CD8-positive, alpha-beta T cell (primary cell): ENCODE measurements at regions of chr5 and their contacts with region 1.

Region 1: GRCh38 chr5:140113699-140114263 is at the start of gene PURA:
- DNase-seq: peak; percentile 93 to 98 (median 98)
- ATAC-seq: peak; percentile 91
- H3K4me3 ChIP-seq: peak within 1 kb of the TSS; percentile 74 to 88
- H3K4me3 Mint-ChIP-seq: peak within 1 kb of the TSS; percentile 91
- H3K27ac ChIP-seq: peak within 1 kb of the TSS; percentile 82 to 84
- H3K27ac Mint-ChIP-seq: peak within 1 kb of the TSS; percentile 95
- H3K4me1 ChIP-seq: peaks cover 69% of the 10 kb centered on the region
- H3K4me1 Mint-ChIP-seq: peaks cover 77% of the 10 kb centered on the region
- H3K27me3 ChIP-seq: no peaks in the 10 kb centered on the region
- H3K27me3 Mint-ChIP-seq: peaks cover 12% of the 10 kb centered on the region
- CTCF ChIP-seq: no peak
- total RNA-seq, gene PURA: 4.0 to 4.3 TPM

Region 2: DNA sequence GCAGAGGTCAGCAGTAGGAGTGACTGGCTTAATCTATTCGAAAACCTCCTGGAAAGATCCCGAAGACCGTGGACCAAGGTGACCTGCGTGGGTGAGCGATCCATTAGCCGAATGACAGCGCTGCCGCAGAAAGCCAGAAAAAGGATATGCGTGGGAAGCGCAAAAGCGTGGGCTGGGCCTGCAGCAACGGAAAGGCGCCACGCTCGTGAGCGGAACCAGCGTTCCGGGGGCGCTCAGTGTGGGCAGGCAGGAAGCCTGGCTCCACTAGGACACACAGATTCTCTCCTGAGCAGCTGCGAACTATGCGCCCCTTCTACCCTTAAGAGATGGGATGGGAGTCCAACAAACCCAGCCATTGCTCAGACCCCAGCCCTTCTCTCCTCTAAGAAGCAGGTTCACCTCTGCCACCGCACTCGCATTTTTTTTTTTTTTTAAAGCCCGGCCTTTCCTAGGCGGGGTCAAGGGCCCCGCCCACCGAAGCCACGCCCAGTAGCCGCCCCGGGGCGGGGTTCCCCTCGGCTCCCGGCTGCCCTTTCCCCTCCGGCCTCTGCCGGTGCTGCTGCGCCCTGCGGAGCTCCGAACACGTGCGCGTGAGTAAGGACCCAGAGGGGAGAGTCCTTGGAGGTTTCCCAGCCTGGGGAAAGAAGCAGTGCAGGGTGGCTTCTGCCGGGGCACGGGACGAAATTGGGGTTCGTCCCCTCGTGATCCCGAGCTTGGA is 840.0 kb before region 1 on chr5:
- CTCF ChIA-PET with region 1: no interaction called
- POLR2A ChIA-PET with region 1: no interaction called
- intact Hi-C with region 1: loop called in 1 of 2 experiments (anchors 10 kb)
- DNase-seq: peak; percentile 73 to 91 (median 83)
- ATAC-seq: peak; percentile 90
- H3K4me3 ChIP-seq: peak overlapping the region; percentile 81 to 86
- H3K4me3 Mint-ChIP-seq: peak overlapping the region; percentile 88
- H3K27ac ChIP-seq: peak overlapping the region; percentile 56 to 57
- H3K27ac Mint-ChIP-seq: peak overlapping the region; percentile 72
- H3K4me1 ChIP-seq: peaks cover 36% of the 10 kb centered on the region
- H3K4me1 Mint-ChIP-seq: peaks cover 50% of the 10 kb centered on the region
- H3K27me3 ChIP-seq: no peaks in the 10 kb centered on the region
- H3K27me3 Mint-ChIP-seq: no peaks in the 10 kb centered on the region
- CTCF ChIP-seq: no peak

Region 3: GRCh38 chr5:140073296-140073695 is 40.5 kb before region 1 on chr5:
- CTCF ChIA-PET with region 1: interaction called, 18 read pairs
- POLR2A ChIA-PET with region 1: no interaction called
- intact Hi-C with region 1: loop called (anchors 2 to 5 kb)
- DNase-seq: peak in 2 of 9 experiments; percentile 56 to 62
- ATAC-seq: no peak
- H3K4me3 ChIP-seq: no peak overlapping the region
- H3K4me3 Mint-ChIP-seq: no peak overlapping the region
- H3K27ac ChIP-seq: no peak overlapping the region
- H3K27ac Mint-ChIP-seq: no peak overlapping the region
- H3K4me1 ChIP-seq: no peaks in the 10 kb centered on the region
- H3K4me1 Mint-ChIP-seq: no peaks in the 10 kb centered on the region
- H3K27me3 ChIP-seq: peaks cover 0 to 12% of the 10 kb centered on the region in 2 experiments
- H3K27me3 Mint-ChIP-seq: peaks cover 28% of the 10 kb centered on the region
- CTCF ChIP-seq: peak; percentile 94

Region 4: DNA sequence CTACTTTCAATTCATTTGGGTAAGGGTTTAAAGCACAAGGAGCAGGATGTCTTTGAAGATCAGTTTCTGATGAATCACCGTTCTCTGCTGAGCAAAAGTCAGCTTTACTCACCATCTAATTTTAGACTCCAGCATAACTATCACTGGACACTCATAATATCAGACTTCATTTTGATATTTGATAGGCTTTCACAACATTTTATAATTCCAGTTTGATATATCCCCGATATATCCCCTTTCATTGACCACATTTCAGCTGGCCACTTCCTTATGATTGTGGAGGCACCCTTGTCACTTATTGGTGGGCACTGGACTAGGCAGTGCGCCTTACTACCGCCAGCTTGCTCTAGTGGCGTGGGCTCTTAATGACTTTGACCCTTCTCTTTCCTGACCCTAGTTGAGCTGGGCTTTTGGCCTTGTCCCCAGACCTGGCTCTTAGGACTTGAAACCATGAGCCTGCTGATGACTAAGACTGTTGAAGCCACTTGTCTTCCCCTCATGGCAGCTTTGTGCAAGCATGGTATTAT is 108.0 kb after region 1 on chr5:
- CTCF ChIA-PET with region 1: no interaction called
- POLR2A ChIA-PET with region 1: no interaction called
- intact Hi-C with region 1: no loop called
- DNase-seq: no peak
- ATAC-seq: no peak
- H3K4me3 ChIP-seq: no peak overlapping the region
- H3K4me3 Mint-ChIP-seq: no peak overlapping the region
- H3K27ac ChIP-seq: no peak overlapping the region
- H3K27ac Mint-ChIP-seq: no peak overlapping the region
- H3K4me1 ChIP-seq: no peaks in the 10 kb centered on the region
- H3K4me1 Mint-ChIP-seq: no peaks in the 10 kb centered on the region
- H3K27me3 ChIP-seq: no peaks in the 10 kb centered on the region
- H3K27me3 Mint-ChIP-seq: peaks cover 2% of the 10 kb centered on the region
- CTCF ChIP-seq: no peak

Region 5: GRCh38 chr5:140302786-140303639 is 189.2 kb after region 1 on chr5 and contains the start of gene PFDN1:
- CTCF ChIA-PET with region 1: no interaction called
- POLR2A ChIA-PET with region 1: no interaction called
- intact Hi-C with region 1: loop called (anchors 5 kb)
- DNase-seq: peak; percentile 77 to 97 (median 90)
- ATAC-seq: peak; percentile 100
- H3K4me3 ChIP-seq: peak within 1 kb of the TSS; percentile 73 to 87
- H3K4me3 Mint-ChIP-seq: peak within 1 kb of the TSS; percentile 99
- H3K27ac ChIP-seq: peak within 1 kb of the TSS; percentile 61 to 82
- H3K27ac Mint-ChIP-seq: peak within 1 kb of the TSS; percentile 98
- H3K4me1 ChIP-seq: peaks cover 14% of the 10 kb centered on the region
- H3K4me1 Mint-ChIP-seq: peaks cover 29% of the 10 kb centered on the region
- H3K27me3 ChIP-seq: no peaks in the 10 kb centered on the region
- H3K27me3 Mint-ChIP-seq: peaks cover 4% of the 10 kb centered on the region
- CTCF ChIP-seq: no peak
- total RNA-seq, gene PFDN1: 28.4 to 30.5 TPM

Region 6: DNA sequence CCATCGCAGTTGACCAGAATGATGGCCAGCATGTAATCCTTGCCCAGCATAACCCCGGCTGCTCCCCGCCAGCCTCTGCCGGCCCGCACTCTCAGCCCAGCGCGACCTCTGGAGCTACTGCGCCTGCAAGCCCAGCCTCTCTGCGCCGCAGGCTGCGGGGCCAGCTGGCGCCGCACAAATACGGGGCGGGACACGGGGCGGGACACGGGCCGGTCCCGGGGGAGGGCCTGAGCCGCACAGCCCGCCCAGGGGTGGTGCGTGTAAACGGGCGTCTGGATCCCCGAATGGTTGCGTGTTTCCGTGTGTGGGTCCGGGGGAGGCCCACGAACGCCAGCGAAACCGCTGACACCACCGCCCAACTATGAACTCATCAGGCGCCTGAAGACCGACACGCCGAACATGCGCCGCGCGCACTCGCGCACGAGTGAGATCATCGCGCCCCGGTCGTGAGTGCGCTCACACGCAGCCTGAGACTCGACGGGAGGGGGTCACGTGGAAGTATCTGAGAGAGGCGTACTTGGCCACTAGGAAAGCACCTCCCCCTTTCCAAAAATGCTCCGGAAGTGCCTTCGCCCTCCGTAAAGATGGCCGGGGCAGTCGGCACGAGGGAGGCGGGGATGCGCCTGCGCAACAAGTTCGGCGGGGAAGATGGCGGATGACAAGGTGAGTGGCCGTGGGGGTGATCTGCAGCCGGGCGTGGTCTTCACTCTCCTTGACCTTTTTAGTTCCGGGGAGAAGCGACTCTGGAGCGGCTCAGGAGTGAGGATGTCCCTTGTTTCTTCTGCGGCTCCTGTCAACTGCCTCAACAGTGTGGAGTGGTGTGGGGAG is 450.6 kb after region 1 on chr5 and contains the starts of genes APBB3 and SLC35A4:
- CTCF ChIA-PET with region 1: no interaction called
- POLR2A ChIA-PET with region 1: no interaction called
- intact Hi-C with region 1: loop called (anchors 2 to 5 kb)
- DNase-seq: peak; percentile 92 to 100 (median 95)
- ATAC-seq: peak; percentile 88
- H3K4me3 ChIP-seq: peak within 1 kb of the TSS; percentile 52 to 79
- H3K4me3 Mint-ChIP-seq: peak within 1 kb of the TSS; percentile 88
- H3K27ac ChIP-seq: peak within 1 kb of the TSS; percentile 73 to 92
- H3K27ac Mint-ChIP-seq: peak within 1 kb of the TSS; percentile 94
- H3K4me1 ChIP-seq: peaks cover 30% of the 10 kb centered on the region
- H3K4me1 Mint-ChIP-seq: peaks cover 62% of the 10 kb centered on the region
- H3K27me3 ChIP-seq: no peaks in the 10 kb centered on the region
- H3K27me3 Mint-ChIP-seq: no peaks in the 10 kb centered on the region
- CTCF ChIP-seq: no peak
- total RNA-seq, gene APBB3: 51.0 to 51.7 TPM
- total RNA-seq, gene SLC35A4: 14.8 to 19.4 TPM

Region 7: GRCh38 chr5:140690941-140691924 is 577.5 kb after region 1 on chr5 and contains the starts of genes HARS1 and HARS2:
- CTCF ChIA-PET with region 1: no interaction called
- POLR2A ChIA-PET with region 1: no interaction called
- intact Hi-C with region 1: loop called in 1 of 2 experiments (anchors 10 kb)
- DNase-seq: peak; percentile 58 to 92 (median 83)
- ATAC-seq: peak; percentile 88
- H3K4me3 ChIP-seq: peak within 1 kb of the TSS; percentile 84 to 94
- H3K4me3 Mint-ChIP-seq: peak within 1 kb of the TSS; percentile 99
- H3K27ac ChIP-seq: peak within 1 kb of the TSS; percentile 77 to 87
- H3K27ac Mint-ChIP-seq: peak within 1 kb of the TSS; percentile 98
- H3K4me1 ChIP-seq: peaks cover 23% of the 10 kb centered on the region
- H3K4me1 Mint-ChIP-seq: peaks cover 48% of the 10 kb centered on the region
- H3K27me3 ChIP-seq: no peaks in the 10 kb centered on the region
- H3K27me3 Mint-ChIP-seq: no peaks in the 10 kb centered on the region
- CTCF ChIP-seq: no peak
- total RNA-seq, gene HARS1: 67.3 to 70.2 TPM
- total RNA-seq, gene HARS2: 41.3 to 43.2 TPM